Panc1 (cell line): ENCODE measurements at regions of chr17 and their contacts with region 1.

Region 1: DNA sequence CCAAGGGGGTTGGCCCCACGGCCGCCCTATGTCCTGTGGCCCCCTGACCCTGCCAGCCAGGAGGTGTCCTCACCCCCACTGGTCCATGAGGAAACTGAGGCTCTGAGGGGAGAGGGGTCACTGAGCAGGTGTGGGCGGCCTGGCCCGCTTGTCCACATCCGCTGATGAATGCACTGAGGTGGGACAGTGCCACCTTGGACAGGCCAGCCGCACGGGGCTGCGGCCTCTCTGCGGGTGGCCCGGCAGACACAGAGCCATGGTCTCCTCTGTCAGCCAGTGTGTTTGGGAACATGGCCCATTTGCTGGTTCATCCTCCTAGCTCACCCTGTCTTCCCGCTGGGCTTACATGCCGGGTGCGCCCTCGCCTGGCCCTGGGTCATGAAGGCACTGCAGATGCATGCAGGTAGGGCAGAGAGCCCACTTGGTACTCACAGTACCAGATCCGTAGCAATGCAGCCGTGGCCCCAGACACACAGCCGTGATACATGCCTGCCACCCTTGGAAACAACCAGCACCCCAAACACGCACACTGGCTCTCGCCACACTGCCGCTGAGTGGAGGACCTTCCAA is 93.9 kb downstream of the ENGASE start:
- DNase-seq: no peak
- ATAC-seq: peak; percentile 80
- H3K4me3 ChIP-seq: no peak overlapping the region
- H3K27ac ChIP-seq: no peak overlapping the region
- H3K4me1 ChIP-seq: no peaks in the 10 kb centered on the region
- H3K27me3 ChIP-seq: peaks cover 8% of the 10 kb centered on the region; the same call in 1 of the 2 replicates
- CTCF ChIP-seq: no peak

Region 2: GRCh38 chr17:79087428-79088143 is 81.0 kb before region 1 on chr17:
- CTCF ChIA-PET with region 1: interaction called, 3 read pairs
- POLR2A ChIA-PET with region 1: no interaction called
- in situ Hi-C with region 1: no loop called
- intact Hi-C with region 1: loop called (anchors 5 kb)
- DNase-seq: no peak
- ATAC-seq: peak; percentile 89
- H3K4me3 ChIP-seq: no peak overlapping the region
- H3K27ac ChIP-seq: no peak overlapping the region
- H3K4me1 ChIP-seq: no peaks in the 10 kb centered on the region
- H3K27me3 ChIP-seq: no peaks in the 10 kb centered on the region
- CTCF ChIP-seq: peak; percentile 94

Region 3: DNA sequence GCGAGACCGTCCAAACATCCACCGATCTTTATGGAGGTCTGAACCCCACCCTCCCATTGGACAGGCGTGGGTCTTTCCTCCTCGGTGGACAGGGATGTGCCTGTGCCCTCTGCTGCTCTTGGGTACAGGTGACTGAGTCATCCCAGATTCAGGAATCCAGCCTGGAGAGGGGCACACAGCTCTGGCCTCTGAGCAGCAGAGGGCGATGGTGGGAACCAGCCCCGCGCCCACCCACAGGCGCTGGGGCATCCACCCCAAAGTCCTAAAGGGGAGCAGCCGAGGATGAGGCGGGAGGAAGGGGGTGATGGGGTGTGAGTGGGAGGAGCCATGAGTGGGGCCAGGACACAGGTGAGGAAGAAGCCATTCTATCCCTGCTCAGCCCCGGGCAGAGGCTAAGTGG is 59.0 kb before region 1 on chr17:
- CTCF ChIA-PET with region 1: no interaction called
- POLR2A ChIA-PET with region 1: no interaction called
- in situ Hi-C with region 1: no loop called
- intact Hi-C with region 1: no loop called
- DNase-seq: no peak
- ATAC-seq: no peak
- H3K4me3 ChIP-seq: no peak overlapping the region
- H3K27ac ChIP-seq: no peak overlapping the region
- H3K4me1 ChIP-seq: no peaks in the 10 kb centered on the region
- H3K27me3 ChIP-seq: no peaks in the 10 kb centered on the region; the same call in 1 of the 2 replicates
- CTCF ChIP-seq: peak; percentile 75; the same call in 1 of the 2 replicates